ENCODE measurements at regions of chr7 and their contacts with region 1.

Region 1: GRCh38 chr7:3294432-3295100 is 6.5 kb upstream of the SDK1 start:
- DNase-seq: no peak
- ATAC-seq: no peak
- H3K4me3 ChIP-seq: no peak overlapping the region
- H3K27ac ChIP-seq: no peak overlapping the region
- H3K4me1 ChIP-seq: no peaks in the 10 kb centered on the region
- H3K27me3 ChIP-seq: peaks cover 0 to 28% (median 13%) of the 10 kb centered on the region in 7 donors
- CTCF ChIP-seq: no peak

Region 2: DNA sequence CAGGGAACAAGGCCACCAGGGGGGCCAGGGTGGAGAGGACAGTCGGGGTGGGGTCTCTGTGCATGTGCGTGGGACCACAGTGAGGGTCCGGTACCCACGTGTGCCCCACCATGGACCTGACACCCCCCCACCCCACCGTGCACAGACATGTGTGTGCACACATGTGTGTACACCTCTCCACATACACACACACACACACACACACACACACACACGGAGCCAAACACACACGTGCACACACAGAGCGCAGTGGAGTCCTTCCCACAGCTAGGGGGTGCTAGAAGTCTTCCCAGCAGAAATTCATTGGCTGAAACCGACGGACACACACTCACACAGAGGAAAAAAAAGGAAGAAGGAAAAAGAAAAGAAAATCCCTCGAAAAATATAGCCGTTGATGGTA is 407.7 kb before region 1 on chr7:
- intact Hi-C with region 1: loop called in 1 of 10 experiments (anchors 10 kb)
- DNase-seq: peak in 1 of 2 donors; percentile 45
- ATAC-seq: peak in 7 of 8 donors; percentile 42 to 82 (median 68)
- H3K4me3 ChIP-seq: no peak overlapping the region
- H3K27ac ChIP-seq: no peak overlapping the region
- H3K4me1 ChIP-seq: no peaks in the 10 kb centered on the region
- H3K27me3 ChIP-seq: peaks cover 0 to 4% (median 0%) of the 10 kb centered on the region in 7 donors
- CTCF ChIP-seq: peak; percentile 20 to 66 (median 55)